ENCODE measurements at regions of chr2 and their contacts with region 1.

Region 1: DNA sequence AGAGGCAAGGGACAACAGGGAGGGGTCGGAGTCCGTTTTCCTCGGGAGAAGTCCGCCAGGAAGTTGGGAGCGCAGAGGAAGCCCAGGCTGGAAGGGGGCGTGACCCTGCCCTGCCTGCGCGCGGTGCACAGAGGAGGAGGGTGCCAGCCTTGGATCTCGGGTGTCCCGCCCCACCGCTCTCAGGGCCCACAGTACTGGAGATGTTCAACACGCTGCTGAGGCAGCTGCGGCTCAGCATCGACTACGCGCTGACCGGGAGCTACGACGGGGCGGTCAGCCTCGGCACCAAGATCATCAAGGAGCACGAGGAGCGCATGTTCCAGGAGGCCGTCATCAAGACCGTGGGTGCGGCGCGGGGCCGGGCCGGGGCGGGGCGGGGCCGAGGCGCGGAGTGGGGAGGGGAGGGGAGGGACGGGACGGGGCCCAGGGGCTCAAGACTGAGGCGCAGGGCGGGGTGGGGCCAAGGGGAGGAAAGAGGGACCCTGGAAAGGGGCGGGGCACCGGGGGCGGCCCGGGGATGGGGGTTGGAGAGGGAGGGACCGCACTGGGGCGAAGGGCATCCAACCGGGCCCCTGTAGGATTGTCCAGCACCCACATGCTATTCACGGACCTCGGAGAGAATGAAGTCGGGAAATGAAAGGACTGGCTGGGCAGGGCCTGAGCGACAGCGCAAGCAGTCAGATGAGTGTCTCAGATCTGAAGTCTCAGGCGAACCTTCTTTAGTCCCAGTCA is 36.6 kb downstream of the POMC start:
- DNase-seq: no peak
- H3K4me3 ChIP-seq: no peak overlapping the region
- H3K27me3 ChIP-seq: peaks cover under 1% of the 10 kb centered on the region; the same call in 1 of the 2 replicates
- CTCF ChIP-seq: no peak

Region 2: DNA sequence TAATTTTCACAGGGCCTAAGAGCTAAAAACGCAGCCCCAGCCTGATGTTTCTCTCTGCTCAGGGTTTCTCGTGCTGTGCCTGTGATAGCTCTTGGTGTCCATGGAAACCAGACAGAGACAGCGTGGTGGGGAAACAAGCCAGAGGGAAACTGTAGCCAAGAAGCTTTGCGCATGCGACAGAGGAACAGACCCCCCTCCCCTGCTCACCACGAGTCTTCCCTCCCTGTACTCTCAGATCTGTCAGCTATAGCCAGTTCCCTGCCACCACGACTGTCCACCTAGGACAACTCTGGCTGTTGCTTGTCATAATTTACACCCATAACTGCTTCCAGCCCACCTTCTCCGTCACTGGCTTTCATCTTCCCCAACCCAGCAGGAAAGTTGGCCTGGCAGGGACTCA is 146.8 kb before region 1 on chr2:
- CTCF ChIA-PET with region 1: interaction called, 10 read pairs
- POLR2A ChIA-PET with region 1: no interaction called
- DNase-seq: no peak
- H3K4me3 ChIP-seq: no peak overlapping the region
- H3K27me3 ChIP-seq: no peaks in the 10 kb centered on the region; the same call in 1 of the 2 replicates
- CTCF ChIP-seq: no peak

Measured in BJ (cell line).